ENCODE measurements at regions of chr10 and their contacts with region 1.

Region 1: GRCh38 chr10:69344591-69345252 is 66.4 kb downstream of the HK1 start:
- DNase-seq: peak in 6 of 9 experiments; percentile 27 to 65 (median 42)
- ATAC-seq: peak; percentile 77
- H3K4me3 ChIP-seq: peak overlapping the region in 1 of 2 experiments; percentile 29
- H3K4me3 Mint-ChIP-seq: peak overlapping the region; percentile 66
- H3K27ac ChIP-seq: peak overlapping the region; percentile 8 to 63
- H3K27ac Mint-ChIP-seq: peak overlapping the region; percentile 93
- H3K4me1 ChIP-seq: peaks cover 57% of the 10 kb centered on the region
- H3K4me1 Mint-ChIP-seq: peaks cover 78% of the 10 kb centered on the region
- H3K27me3 ChIP-seq: no peaks in the 10 kb centered on the region
- H3K27me3 Mint-ChIP-seq: no peaks in the 10 kb centered on the region
- CTCF ChIP-seq: no peak

Region 2: GRCh38 chr10:69360485-69361324 is 16.0 kb after region 1 on chr10:
- CTCF ChIA-PET with region 1: interaction called, 3 read pairs
- POLR2A ChIA-PET with region 1: interaction called, 3 read pairs
- intact Hi-C with region 1: loop called in 1 of 2 experiments (anchors 1 kb)
- DNase-seq: no peak
- ATAC-seq: no peak
- H3K4me3 ChIP-seq: no peak overlapping the region
- H3K4me3 Mint-ChIP-seq: peak overlapping the region; percentile 49
- H3K27ac ChIP-seq: no peak overlapping the region
- H3K27ac Mint-ChIP-seq: peak overlapping the region; percentile 95
- H3K4me1 ChIP-seq: peaks cover 47% of the 10 kb centered on the region
- H3K4me1 Mint-ChIP-seq: peaks cover 59% of the 10 kb centered on the region
- H3K27me3 ChIP-seq: no peaks in the 10 kb centered on the region
- H3K27me3 Mint-ChIP-seq: no peaks in the 10 kb centered on the region
- CTCF ChIP-seq: no peak